K562 (cell line): ENCODE measurements at regions of chr9 and their contacts with region 1.

Region 1: GRCh38 chr9:99076483-99077171 is 28.3 kb upstream of the TGFBR1 start:
- DNase-seq: peak; percentile 67 to 86 (median 77)
- ATAC-seq: peak; percentile 27
- H3K4me3 ChIP-seq: no peak overlapping the region
- H3K27ac ChIP-seq: peak overlapping the region; percentile 96
- H3K4me1 ChIP-seq: peaks cover 23 to 53% of the 10 kb centered on the region in 2 experiments
- H3K27me3 ChIP-seq: no peaks in the 10 kb centered on the region
- CTCF ChIP-seq: no peak
- EP300 ChIP-seq: peak; percentile 59
- POLR2A ChIP-seq: no peak
- RAD21 ChIP-seq: peak in 1 of 2 experiments; percentile 13; a peak in 1 of 4 replicates

Region 2: GRCh38 chr9:98867429-98868168 is 209.0 kb before region 1 on chr9:
- CTCF ChIA-PET with region 1: no interaction called
- POLR2A ChIA-PET with region 1: interaction called, 3 read pairs
- in situ Hi-C with region 1: no loop called
- intact Hi-C with region 1: loop called (anchors 5 kb)
- DNase-seq: peak; percentile 43 to 86 (median 62)
- ATAC-seq: peak; percentile 97
- H3K4me3 ChIP-seq: no peak overlapping the region
- H3K27ac ChIP-seq: peak overlapping the region; percentile 82
- H3K4me1 ChIP-seq: peaks cover 0 to 34% of the 10 kb centered on the region in 2 experiments; a peak in 3 of 5 replicates
- H3K27me3 ChIP-seq: no peaks in the 10 kb centered on the region
- CTCF ChIP-seq: no peak
- EP300 ChIP-seq: peak; percentile 98
- POLR2A ChIP-seq: no peak
- RAD21 ChIP-seq: peak; percentile 42 to 66

Region 3: DNA sequence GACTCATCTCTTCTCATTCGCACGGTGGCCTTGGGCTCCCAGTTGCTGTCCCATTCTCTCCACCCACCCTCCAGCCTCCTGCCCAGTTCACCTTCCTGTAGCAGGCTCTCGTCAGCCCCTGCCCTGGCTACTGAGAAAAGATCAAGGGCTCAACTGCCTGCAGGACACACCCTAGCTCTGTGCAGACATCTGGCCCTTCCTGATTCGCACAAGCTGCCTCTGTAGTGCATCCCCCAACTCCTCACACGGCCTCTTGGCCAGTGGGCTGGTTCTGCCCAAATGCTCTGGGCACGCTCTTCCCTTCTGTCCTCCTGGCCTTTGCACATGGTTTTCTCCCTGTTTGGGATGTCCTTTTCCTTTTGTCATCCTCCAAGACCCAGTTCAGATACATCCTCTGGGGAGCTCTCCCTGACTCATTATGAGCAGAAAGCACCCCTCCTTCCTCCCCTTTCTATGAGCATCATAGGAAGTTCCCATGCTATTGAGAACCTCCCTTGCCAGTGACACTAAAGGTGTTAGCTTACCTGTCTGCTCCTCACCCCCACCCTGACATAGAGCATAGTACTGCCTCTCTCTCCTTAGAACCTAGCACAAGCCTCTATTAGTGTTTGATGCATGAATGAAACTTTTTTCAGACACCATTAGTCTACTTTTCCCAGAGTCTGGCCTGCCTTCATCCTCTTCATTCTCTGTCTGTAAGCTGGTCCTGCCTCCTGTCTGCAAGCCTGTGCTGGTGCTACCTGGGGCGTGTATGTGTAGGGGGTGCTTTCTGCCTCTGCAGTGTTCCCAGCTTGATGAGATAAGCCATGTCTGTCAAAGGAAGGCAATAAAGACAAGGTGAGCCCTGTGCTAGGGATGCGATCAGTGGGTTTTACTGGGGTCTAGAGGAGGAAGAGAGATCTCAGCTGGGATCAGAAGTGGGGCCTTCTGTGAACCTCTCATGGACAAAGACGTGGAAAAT is 50.0 kb before region 1 on chr9:
- CTCF ChIA-PET with region 1: no interaction called
- POLR2A ChIA-PET with region 1: interaction called, 8 read pairs
- in situ Hi-C with region 1: no loop called
- intact Hi-C with region 1: loop called (anchors 5 kb)
- DNase-seq: peak in 2 of 4 experiments; percentile 40 to 54
- ATAC-seq: peak; percentile 67
- H3K4me3 ChIP-seq: no peak overlapping the region
- H3K27ac ChIP-seq: no peak overlapping the region
- H3K4me1 ChIP-seq: peaks cover 16 to 32% of the 10 kb centered on the region in 2 experiments
- H3K27me3 ChIP-seq: no peaks in the 10 kb centered on the region
- CTCF ChIP-seq: peak; percentile 11 to 41 (median 15); a peak in 2 of 6 replicates
- EP300 ChIP-seq: no peak
- POLR2A ChIP-seq: no peak
- RAD21 ChIP-seq: no peak

Region 4: GRCh38 chr9:99057665-99058625 is 18.7 kb before region 1 on chr9:
- CTCF ChIA-PET with region 1: no interaction called
- POLR2A ChIA-PET with region 1: interaction called, 20 read pairs
- in situ Hi-C with region 1: no loop called
- intact Hi-C with region 1: loop called (anchors 1 kb)
- DNase-seq: peak; percentile 61 to 94 (median 78)
- ATAC-seq: peak; percentile 89
- H3K4me3 ChIP-seq: 0 out of 2 replicates have a peak overlapping the region, but pooled peaks have one; percentile 4
- H3K27ac ChIP-seq: peak overlapping the region; percentile 83
- H3K4me1 ChIP-seq: peaks cover 13 to 50% of the 10 kb centered on the region in 2 experiments
- H3K27me3 ChIP-seq: no peaks in the 10 kb centered on the region
- CTCF ChIP-seq: no peak
- EP300 ChIP-seq: peak; percentile 87
- POLR2A ChIP-seq: no peak
- RAD21 ChIP-seq: peak in 1 of 2 experiments; percentile 32; a peak in 2 of 4 replicates

Region 5: DNA sequence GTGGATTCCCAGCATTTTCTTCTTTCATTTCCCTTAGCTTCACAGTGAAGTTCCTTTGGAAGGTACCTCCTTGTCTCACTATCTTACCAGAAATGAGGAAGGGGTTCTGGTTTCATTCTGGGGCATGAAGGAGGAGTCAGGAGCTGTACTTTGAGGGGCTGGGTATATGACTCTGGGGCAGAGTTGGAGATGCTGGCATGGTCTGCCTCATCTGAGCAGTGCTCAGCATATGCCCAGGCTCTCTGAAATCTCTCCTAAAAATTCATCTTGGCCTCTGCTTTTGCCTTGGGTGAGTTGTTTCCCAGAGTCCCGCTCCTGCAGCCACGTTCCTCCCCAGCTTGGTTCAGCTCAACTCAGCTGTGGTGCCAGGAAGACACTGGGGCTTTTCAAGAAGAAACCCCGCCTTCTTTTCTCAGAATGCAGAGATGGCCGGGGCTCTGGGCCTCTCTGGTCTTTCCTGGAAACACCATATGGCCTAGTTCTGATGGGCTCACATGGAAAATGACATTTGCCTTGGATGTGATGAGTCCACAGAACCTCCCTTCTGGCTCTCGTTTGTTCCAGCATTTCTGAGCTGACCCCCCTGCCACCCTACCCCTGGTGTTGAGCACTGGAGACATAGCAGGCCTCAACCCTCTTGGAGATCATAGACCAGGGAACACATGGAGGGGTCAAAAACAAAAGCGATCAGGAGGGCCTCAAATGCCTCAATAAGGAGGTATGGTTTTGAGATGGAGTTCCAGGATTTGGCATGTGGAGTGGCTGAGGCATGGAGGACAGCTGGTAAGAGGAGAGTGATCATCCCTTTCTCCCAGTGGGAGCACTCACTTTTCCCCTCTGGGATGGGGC is 16.2 kb after region 1 on chr9:
- CTCF ChIA-PET with region 1: no interaction called
- POLR2A ChIA-PET with region 1: interaction called, 53 read pairs
- in situ Hi-C with region 1: no loop called
- intact Hi-C with region 1: no loop called
- DNase-seq: peak; percentile 34 to 78 (median 56)
- ATAC-seq: peak; percentile 70
- H3K4me3 ChIP-seq: no peak overlapping the region
- H3K27ac ChIP-seq: peak overlapping the region; percentile 53
- H3K4me1 ChIP-seq: peaks cover 9 to 37% of the 10 kb centered on the region in 2 experiments
- H3K27me3 ChIP-seq: no peaks in the 10 kb centered on the region
- CTCF ChIP-seq: no peak
- EP300 ChIP-seq: no peak
- POLR2A ChIP-seq: peak; percentile 32; the same call in 1 of the 2 replicates
- RAD21 ChIP-seq: no peak

Region 6: GRCh38 chr9:99140685-99141314 is 64.2 kb after region 1 on chr9:
- CTCF ChIA-PET with region 1: no interaction called
- POLR2A ChIA-PET with region 1: interaction called, 4 read pairs
- in situ Hi-C with region 1: no loop called
- intact Hi-C with region 1: loop called (anchors 2 kb)
- DNase-seq: peak; percentile 60 to 70 (median 66)
- ATAC-seq: peak; percentile 96
- H3K4me3 ChIP-seq: no peak overlapping the region
- H3K27ac ChIP-seq: no peak overlapping the region
- H3K4me1 ChIP-seq: peaks cover 0 to 15% of the 10 kb centered on the region in 2 experiments; a peak in 3 of 5 replicates
- H3K27me3 ChIP-seq: no peaks in the 10 kb centered on the region
- CTCF ChIP-seq: peak; percentile 85 to 88 (median 86)
- EP300 ChIP-seq: no peak
- POLR2A ChIP-seq: no peak
- RAD21 ChIP-seq: peak; percentile 94 to 97

Region 7: DNA sequence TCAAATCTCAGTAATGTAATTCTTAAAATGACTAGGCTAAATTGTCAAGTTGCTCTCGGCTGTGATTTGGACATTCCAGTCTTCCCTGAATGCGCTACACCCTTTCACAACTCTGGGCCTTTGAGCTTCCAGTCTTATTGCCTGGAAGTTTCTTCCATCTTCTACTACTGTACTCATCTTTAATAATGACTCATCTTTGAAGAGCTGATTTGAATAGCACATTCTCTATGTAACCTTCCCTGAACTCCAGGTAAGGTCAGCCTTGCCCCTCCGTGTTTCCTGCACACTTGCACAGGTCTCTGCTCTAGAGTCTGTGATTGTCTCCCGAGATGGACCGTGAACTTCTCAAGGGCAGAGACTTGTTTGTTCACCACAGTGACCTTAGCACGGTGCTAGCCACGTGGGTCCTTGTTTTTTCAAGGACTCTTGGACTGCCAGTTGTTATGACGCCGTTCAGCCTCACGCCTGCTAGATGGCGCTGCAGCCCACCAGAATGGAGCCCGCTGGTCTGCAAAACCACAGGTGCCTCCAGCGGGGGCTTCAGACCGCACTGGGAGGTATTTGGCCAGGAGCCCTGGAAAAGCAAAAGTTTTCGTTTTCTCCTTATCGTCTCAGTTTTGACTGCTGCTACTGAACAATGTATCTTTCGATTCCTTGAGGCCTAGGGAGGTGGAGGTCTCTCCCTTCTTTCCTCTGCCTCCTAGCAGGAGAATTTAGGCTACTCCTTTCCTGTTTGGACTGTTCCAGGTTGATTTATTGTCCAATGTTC is 189.8 kb after region 1 on chr9:
- CTCF ChIA-PET with region 1: no interaction called
- POLR2A ChIA-PET with region 1: no interaction called
- in situ Hi-C with region 1: no loop called
- intact Hi-C with region 1: no loop called
- DNase-seq: peak; percentile 61 to 84 (median 73)
- ATAC-seq: peak; percentile 95
- H3K4me3 ChIP-seq: no peak overlapping the region
- H3K27ac ChIP-seq: no peak overlapping the region
- H3K4me1 ChIP-seq: peaks cover 3 to 4% of the 10 kb centered on the region in 2 experiments; a peak in 3 of 5 replicates
- H3K27me3 ChIP-seq: peaks cover 4 to 10% of the 10 kb centered on the region in 2 experiments; a peak in 3 of 5 replicates
- CTCF ChIP-seq: peak; percentile 92 to 96 (median 93)
- EP300 ChIP-seq: no peak
- POLR2A ChIP-seq: no peak
- RAD21 ChIP-seq: peak; percentile 89 to 90